Head of caudate nucleus (tissue), 42 donors: ENCODE measurements at regions of chr4 and their contacts with region 1.

Region 1: DNA sequence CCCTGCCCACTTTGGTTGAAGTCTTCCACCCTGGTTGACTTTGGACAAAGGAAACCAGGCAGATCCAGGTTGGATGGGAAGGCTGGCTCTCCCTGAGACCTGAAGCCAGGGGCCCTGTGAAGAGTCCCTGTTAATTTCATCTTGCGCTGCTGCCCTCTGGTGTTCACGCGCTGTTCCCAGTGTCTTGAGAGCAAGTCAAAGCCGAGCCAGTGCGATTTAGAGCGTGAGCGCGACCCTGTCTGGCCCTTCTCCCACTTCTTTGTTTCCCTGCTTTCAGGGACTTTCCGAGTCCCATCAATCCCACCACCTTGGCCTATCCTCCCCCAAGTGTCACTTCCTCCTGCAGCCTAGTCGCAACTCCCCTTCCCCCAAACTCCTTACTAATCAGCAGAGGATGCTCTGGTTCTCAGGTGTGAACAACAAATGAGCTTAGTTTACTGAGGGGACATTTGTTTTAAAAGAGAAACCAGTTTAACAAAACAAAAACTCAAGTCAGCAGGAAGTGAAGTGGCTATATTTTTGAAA is 25.8 kb upstream of the CHRNA9 start:
- DNase-seq: peak; percentile 77 to 96 (median 90)

Region 2: GRCh38 chr4:40003986-40004385 is 305.3 kb before region 1 on chr4:
- intact Hi-C with region 1: no loop called
- DNase-seq: peak in 4 of 42 donors; percentile 7 to 39 (median 12)

Region 3: GRCh38 chr4:40056716-40057585 is 252.4 kb before region 1 on chr4 and contains the start of gene N4BP2:
- intact Hi-C with region 1: loop called (anchors 5 kb)
- DNase-seq: peak in 41 of 42 donors; percentile 38 to 90 (median 78)

Region 4: DNA sequence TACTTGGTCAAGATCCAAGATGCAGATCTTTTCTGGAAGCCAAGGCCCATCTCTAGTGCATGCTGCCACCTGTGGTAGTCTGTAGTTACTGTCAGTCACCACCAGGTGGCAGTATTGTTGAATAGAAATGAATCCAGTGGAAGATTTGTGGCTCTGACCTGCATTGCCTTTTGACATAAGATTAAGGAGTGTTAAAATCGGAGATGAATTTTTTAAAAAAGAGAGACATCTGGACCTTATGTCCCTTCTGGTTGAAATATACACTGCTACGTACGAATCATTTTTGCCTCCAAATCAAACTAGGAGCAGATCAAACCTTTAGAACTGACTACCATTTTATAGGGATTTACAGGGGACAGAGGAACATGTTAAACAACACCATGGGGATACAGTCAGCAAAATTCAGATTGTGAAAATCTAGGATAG is 159.3 kb before region 1 on chr4:
- intact Hi-C with region 1: loop called (anchors 5 kb)
- DNase-seq: peak in 35 of 42 donors; percentile 15 to 83 (median 48)